ENCODE measurements at regions of chr1 and their contacts with region 1.

Region 1: GRCh38 chr1:63975481-63975880 is 201.7 kb downstream of the ROR1 start:
- DNase-seq: no peak
- ATAC-seq: no peak
- H3K4me3 ChIP-seq: no peak overlapping the region
- H3K27ac ChIP-seq: no peak overlapping the region
- H3K4me1 ChIP-seq: peaks cover 4% of the 10 kb centered on the region
- H3K27me3 ChIP-seq: no peaks in the 10 kb centered on the region
- CTCF ChIP-seq: no peak

Region 2: DNA sequence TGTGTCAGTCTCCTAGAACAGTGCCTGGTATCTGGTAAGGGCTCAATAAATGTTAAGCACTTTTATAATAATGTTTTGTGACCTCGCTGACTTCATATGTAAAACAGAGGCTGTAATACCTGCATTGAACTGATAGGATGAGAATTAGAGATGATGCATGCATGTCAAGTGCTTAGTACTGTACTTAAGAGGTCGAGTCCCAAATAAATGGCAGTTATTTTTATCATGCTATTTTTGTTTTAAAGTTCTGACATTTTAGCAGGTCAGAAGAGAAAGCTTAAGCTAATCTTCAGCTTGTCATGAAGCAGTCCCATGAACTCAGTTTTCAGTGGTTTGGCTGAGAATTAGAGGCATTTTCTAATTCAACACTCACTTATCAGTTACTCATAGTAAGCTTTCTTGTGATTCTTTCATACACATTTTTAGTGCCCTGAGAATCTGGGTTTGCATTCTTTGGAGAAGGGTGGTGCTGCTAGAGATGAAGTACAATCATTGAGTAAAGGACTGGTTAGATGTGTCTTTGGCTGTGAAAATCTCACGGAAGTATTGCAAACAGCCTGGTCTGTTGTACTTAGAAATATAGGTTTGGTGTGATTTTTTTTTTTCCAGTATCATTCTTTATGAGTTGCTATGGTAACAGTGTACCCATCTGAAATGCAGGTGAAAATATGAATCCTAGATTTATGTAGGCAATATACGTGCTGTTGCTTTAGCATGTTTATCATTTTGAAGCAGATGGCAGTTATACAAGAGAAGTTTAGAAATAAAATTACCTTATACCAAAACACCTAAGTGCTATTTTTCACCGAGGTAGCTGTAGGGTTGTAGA is 693.8 kb after region 1 on chr1:
- intact Hi-C with region 1: loop called in 1 of 2 experiments (anchors 5 kb)
- DNase-seq: no peak
- ATAC-seq: no peak
- H3K4me3 ChIP-seq: no peak overlapping the region
- H3K27ac ChIP-seq: no peak overlapping the region
- H3K4me1 ChIP-seq: peaks cover 4% of the 10 kb centered on the region
- H3K27me3 ChIP-seq: no peaks in the 10 kb centered on the region
- CTCF ChIP-seq: no peak